ENCODE measurements at regions of chr22 and their contacts with region 1.

Region 1: DNA sequence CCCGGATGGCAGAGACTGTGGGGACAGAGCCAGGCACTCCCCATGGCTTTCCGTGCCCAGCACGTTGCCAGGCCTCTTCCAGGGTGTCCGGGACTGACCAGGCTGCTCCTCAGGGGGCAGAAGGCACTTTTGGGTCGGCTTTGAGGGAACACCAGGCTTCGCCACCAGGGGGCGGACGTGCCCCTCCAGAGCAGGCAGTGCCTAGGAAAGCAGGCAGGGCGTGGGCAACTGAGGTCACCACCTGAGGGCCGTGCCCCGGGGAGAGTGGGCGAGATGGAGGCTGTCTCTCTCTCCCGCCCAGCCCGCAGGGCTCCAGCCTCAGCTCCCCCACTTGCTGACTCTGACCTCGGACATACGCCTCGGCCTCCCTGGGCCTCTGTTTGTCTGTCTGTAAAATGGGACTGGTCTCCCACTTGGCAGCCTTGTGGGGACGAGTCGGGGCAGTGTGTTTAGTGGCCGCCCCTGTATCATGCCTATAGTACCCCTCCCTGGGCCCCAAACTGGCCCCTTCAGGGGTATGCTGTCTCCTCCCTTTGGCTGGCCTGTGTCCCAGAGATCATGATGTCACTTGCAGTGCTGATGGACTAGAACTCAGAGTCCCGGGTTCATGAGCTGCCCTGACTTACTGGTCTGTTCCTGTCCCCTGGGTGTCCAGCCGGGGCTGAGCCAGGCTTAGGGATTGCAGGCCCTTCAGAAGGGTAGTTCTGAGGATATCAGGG is 4.4 kb upstream of the PRR5 start:
- DNase-seq: peak; percentile 50 to 83
- H3K4me3 ChIP-seq: no peak overlapping the region
- H3K27ac ChIP-seq: peak overlapping the region; percentile 72 to 89
- H3K4me1 ChIP-seq: no peaks in the 10 kb centered on the region
- H3K27me3 ChIP-seq: no peaks in the 10 kb centered on the region
- CTCF ChIP-seq: peak; percentile 94 to 96 (median 95)
- POLR2A ChIP-seq: no peak

Region 2: DNA sequence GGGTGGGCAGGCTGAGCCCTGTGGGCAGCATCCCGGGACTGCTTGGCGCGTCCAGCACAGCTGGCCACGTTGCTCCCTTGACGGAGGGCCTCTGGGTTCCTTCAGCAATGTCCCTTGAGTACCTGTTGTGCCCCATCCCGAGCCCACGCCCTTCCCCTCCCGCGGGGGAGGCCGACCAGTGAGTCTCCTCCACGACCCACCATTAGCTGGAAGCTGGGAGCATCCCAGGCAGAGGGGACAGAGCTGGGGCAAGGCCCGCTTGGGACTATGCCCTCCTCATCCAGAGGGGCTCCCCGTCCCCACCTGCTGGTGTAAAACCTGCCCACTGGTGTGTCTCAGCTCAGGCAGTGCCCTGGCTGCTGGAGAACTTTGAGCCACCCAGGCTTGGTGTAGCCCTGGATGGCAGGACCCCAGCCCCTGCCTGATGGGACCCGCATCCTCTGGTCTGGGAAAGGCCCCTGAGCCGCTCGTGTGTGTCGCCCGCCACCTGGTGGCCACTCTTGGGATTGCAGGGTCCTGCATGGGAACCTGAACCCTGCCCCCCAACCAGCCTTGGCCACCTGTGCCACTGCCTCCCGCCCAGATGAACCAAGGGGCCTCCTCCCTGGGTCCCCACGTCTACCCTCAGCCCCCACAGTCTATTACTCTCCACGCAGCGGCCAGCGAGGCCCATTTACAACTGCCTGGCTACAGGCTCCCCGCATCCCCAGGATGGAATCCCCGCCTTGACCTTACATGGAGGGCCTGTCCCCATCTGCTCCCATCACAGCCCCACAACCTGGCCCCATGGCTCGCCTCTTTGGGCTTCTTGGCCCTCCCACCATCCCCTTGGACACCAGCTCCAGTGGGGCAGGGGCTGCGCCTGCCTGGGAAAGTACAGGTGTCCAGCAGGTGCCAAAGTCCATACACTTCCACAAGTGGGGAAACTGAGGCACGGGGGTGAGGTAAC is 38.2 kb after region 1 on chr22:
- intact Hi-C with region 1: loop called (anchors 5 kb)
- DNase-seq: peak in 1 of 2 donors; percentile 79
- H3K4me3 ChIP-seq: no peak overlapping the region
- H3K27ac ChIP-seq: no peak overlapping the region
- H3K4me1 ChIP-seq: peaks cover 0 to 3% of the 10 kb centered on the region in 2 donors
- H3K27me3 ChIP-seq: no peaks in the 10 kb centered on the region
- CTCF ChIP-seq: peak; percentile 94 to 99 (median 97)
- POLR2A ChIP-seq: no peak

Region 3: DNA sequence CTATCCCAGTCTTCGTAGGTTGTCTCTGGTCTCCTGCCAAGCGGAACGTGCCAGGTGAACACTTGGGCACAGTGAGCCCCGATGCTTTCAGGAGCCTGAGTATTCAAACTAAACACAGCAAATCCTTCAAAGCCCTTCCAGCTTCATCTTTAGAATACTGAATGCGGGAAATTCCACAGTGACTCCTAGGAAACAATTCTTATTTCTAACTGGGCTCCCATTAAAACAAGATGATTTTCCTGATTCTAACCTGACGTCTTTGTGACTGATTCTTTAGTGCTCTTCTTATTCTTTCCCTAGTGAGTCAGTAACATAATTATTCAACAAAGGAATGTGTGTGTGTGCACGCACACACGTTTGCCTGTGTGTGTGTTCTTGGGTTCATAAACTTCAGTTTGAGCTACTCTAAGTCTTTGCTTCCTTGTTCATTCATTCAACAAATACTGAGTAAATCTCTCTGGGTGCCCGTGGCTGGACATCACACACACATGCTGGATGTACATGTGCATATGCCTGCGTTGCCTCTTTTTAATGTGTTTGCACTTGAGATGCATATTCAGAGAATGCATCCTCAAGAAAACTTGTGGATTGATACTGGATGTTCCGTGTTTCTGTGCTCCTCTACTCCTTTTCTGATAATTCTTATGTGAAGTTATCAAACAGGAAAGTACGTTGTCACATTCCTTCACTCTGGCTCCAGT is 1144.9 kb after region 1 on chr22:
- intact Hi-C with region 1: no loop called
- DNase-seq: no peak
- H3K4me3 ChIP-seq: no peak overlapping the region
- H3K27ac ChIP-seq: no peak overlapping the region
- H3K4me1 ChIP-seq: no peaks in the 10 kb centered on the region
- H3K27me3 ChIP-seq: no peaks in the 10 kb centered on the region
- CTCF ChIP-seq: no peak
- POLR2A ChIP-seq: no peak

Measured in breast epithelium (tissue), 4 donors.